ENCODE measurements at regions of chrX and their contacts with region 1.

Region 1: DNA sequence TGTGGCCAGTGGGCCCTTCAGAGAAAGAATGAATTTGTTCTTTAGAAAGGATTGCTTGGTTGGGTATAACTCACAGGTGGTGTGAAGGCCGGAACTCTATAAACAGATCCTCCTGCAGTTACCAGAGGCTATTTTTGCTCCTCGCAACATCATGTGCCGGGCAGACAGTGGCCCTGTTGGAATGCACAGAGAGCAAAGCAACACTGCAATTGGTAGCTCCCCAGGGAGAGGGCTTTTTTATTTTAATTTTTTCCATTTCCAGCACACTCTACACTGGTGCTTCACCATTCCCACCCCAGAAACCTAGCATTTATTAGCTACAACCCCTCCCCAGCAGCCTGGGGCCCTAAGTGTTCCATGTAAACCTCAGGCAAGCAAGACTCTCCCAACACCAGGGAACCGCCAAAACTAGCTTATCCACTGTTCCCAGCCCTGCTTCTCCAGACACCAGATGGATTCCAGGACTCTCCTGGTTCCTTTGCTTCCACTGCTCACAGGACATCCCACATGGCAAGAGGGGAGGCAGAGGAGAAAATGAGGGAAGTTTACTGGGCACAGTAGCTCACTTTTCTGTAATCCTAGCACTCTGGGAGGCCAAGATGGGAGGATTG is 75.1 kb upstream of the TMEM164 start:
- DNase-seq: peak in 1 of 2 donors; percentile 16
- ATAC-seq: peak; percentile 75 to 96 (median 86)
- H3K4me3 ChIP-seq: no peak overlapping the region
- H3K27ac ChIP-seq: peak overlapping the region; percentile 58 to 82 (median 77)
- H3K4me1 ChIP-seq: peaks cover 0 to 11% (median 0%) of the 10 kb centered on the region in 9 donors
- H3K27me3 ChIP-seq: peaks cover 0 to 29% (median 0%) of the 10 kb centered on the region in 7 donors
- CTCF ChIP-seq: no peak

Region 2: GRCh38 chrX:109990582-109991276 is 63.0 kb after region 1 on chrX:
- intact Hi-C with region 1: loop called in 1 of 10 experiments (anchors 5 kb)
- DNase-seq: no peak
- ATAC-seq: no peak
- H3K4me3 ChIP-seq: no peak overlapping the region
- H3K27ac ChIP-seq: no peak overlapping the region
- H3K4me1 ChIP-seq: no peaks in the 10 kb centered on the region
- H3K27me3 ChIP-seq: peaks cover 0 to 20% (median 0%) of the 10 kb centered on the region in 7 donors
- CTCF ChIP-seq: no peak

Region 3: GRCh38 chrX:110002300-110003166 is 74.8 kb after region 1 on chrX and contains the start of gene TMEM164:
- intact Hi-C with region 1: loop called in 3 of 10 experiments (anchors 5 to 10 kb)
- DNase-seq: peak; percentile 85 to 89
- ATAC-seq: peak; percentile 91 to 97 (median 94)
- H3K4me3 ChIP-seq: peak within 1 kb of the TSS; percentile 25 to 79 (median 68)
- H3K27ac ChIP-seq: peak within 1 kb of the TSS; percentile 79 to 92 (median 88)
- H3K4me1 ChIP-seq: peaks cover 0 to 34% (median 10%) of the 10 kb centered on the region in 9 donors
- H3K27me3 ChIP-seq: peaks cover 0 to 40% (median 0%) of the 10 kb centered on the region in 7 donors
- CTCF ChIP-seq: peak in 3 of 9 donors; percentile 11 to 39 (median 15)
- total RNA-seq, gene TMEM164: 43.0 to 60.6 (median 49.1) TPM